CD4-positive, alpha-beta T cell (primary cell): ENCODE measurements at regions of chr2 and their contacts with region 1.

Region 1: DNA sequence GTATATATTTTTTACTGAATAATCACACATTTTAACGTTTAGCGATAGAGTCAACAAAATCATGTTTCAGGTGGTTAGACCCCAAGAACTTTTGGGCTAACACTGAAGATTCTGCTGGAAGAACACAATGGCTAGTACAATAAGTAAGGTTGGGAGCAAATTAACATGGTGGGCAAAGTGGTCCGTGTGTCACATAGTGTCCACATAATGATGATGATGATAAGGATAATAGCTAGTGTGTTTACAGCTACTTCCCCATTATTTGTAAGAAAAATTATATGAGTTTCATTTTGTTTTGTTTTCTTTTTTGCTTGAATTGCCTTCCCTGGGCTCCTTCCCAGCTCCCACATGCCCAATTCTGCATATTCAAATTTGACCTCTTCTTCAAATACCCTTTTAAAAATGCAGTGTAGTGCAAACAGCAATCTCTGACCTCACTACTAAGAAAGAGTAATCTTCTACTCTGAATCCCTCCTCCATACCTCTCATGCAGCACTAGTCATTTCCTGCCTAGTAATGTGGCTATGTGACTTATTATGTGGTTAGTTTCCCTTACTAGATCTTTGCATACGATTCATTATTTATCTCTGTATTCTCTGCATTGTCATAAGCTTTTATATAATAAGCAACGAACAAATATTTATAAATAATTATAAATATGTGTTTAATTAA is 16.9 kb upstream of the VPS54 start:
- DNase-seq: peak in 5 of 14 experiments; percentile 10 to 82 (median 74)
- ATAC-seq: peak; percentile 96
- H3K4me3 ChIP-seq: no peak overlapping the region
- H3K4me3 Mint-ChIP-seq: peak overlapping the region; percentile 70
- H3K27ac ChIP-seq: no peak overlapping the region
- H3K27ac Mint-ChIP-seq: peak overlapping the region; percentile 63
- H3K4me1 ChIP-seq: peaks cover 17% of the 10 kb centered on the region
- H3K4me1 Mint-ChIP-seq: peaks cover 51% of the 10 kb centered on the region
- H3K27me3 ChIP-seq: no peaks in the 10 kb centered on the region
- H3K27me3 Mint-ChIP-seq: no peaks in the 10 kb centered on the region
- CTCF ChIP-seq: no peak

Region 2: DNA sequence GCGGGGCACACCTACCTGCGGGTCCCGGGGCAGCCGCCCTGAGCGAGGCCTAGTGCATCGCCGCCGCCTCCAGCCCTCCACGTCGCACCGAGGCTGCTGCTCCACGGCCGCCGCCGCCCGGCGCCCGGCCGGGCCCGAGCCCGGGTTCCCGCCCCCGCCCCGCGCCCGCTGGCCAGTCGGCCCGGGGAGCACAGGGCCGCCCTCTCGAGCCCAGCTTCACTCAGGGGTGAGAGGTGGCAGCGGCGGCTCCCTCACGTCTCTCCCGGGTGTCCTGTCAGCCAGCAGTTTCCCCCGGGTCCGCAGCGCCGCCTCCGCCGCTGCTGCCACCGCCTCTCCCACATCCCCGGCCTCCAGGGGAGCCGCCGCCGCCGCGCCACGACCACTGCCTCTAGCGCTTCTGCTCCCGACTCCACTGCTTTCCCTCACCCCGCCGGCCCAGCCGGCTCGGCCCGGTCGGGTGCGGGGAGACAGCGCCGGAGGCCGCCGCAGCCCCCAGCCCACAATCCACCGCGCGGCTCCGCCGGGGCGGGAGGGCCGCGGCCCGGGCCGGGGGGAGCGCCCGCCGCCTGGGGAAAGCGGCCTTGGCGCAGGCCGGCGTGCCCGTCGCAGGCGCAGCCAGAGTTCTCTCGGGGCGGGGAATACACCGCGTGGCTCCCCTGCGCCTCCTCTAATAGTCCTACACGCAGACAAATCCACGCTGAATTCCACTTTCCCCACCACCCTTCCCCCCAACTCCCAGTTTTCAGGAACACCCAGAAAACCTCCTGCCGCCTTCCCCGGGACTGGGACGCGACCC is 17.0 kb before region 1 on chr2 and contains the start of gene VPS54:
- CTCF ChIA-PET with region 1: interaction called, 7 read pairs
- POLR2A ChIA-PET with region 1: interaction called, 11 read pairs
- intact Hi-C with region 1: loop called in 1 of 2 experiments (anchors 1 kb)
- DNase-seq: peak; percentile 40 to 80 (median 48)
- ATAC-seq: peak; percentile 74
- H3K4me3 ChIP-seq: peak within 1 kb of the TSS; percentile 71
- H3K4me3 Mint-ChIP-seq: peak within 1 kb of the TSS; percentile 100
- H3K27ac ChIP-seq: peak within 1 kb of the TSS; percentile 35 to 54
- H3K27ac Mint-ChIP-seq: peak within 1 kb of the TSS; percentile 95
- H3K4me1 ChIP-seq: peaks cover 12% of the 10 kb centered on the region
- H3K4me1 Mint-ChIP-seq: peaks cover 46% of the 10 kb centered on the region
- H3K27me3 ChIP-seq: no peaks in the 10 kb centered on the region
- H3K27me3 Mint-ChIP-seq: no peaks in the 10 kb centered on the region
- CTCF ChIP-seq: no peak
- total RNA-seq, gene VPS54: 9.5 to 10.8 TPM

Region 3: GRCh38 chr2:64101141-64101591 is 65.0 kb after region 1 on chr2:
- CTCF ChIA-PET with region 1: no interaction called
- POLR2A ChIA-PET with region 1: no interaction called
- intact Hi-C with region 1: no loop called
- DNase-seq: peak in 3 of 14 experiments; percentile 21 to 63 (median 30)
- ATAC-seq: peak; percentile 49
- H3K4me3 ChIP-seq: no peak overlapping the region
- H3K4me3 Mint-ChIP-seq: peak overlapping the region; percentile 35
- H3K27ac ChIP-seq: peak overlapping the region in 1 of 2 donors; percentile 56
- H3K27ac Mint-ChIP-seq: peak overlapping the region; percentile 69
- H3K4me1 ChIP-seq: peaks cover 9% of the 10 kb centered on the region
- H3K4me1 Mint-ChIP-seq: peaks cover 51% of the 10 kb centered on the region
- H3K27me3 ChIP-seq: no peaks in the 10 kb centered on the region
- H3K27me3 Mint-ChIP-seq: no peaks in the 10 kb centered on the region
- CTCF ChIP-seq: no peak

Region 4: GRCh38 chr2:64203858-64204632 is 167.9 kb after region 1 on chr2:
- CTCF ChIA-PET with region 1: no interaction called
- POLR2A ChIA-PET with region 1: interaction called, 3 read pairs
- intact Hi-C with region 1: loop called in 1 of 2 experiments (anchors 10 kb)
- DNase-seq: peak in 9 of 14 experiments; percentile 10 to 94 (median 18)
- ATAC-seq: peak; percentile 30
- H3K4me3 ChIP-seq: peak overlapping the region; percentile 42
- H3K4me3 Mint-ChIP-seq: peak overlapping the region; percentile 80
- H3K27ac ChIP-seq: peak overlapping the region; percentile 72 to 88
- H3K27ac Mint-ChIP-seq: peak overlapping the region; percentile 92
- H3K4me1 ChIP-seq: peaks cover 48% of the 10 kb centered on the region
- H3K4me1 Mint-ChIP-seq: peaks cover 90% of the 10 kb centered on the region
- H3K27me3 ChIP-seq: no peaks in the 10 kb centered on the region
- H3K27me3 Mint-ChIP-seq: no peaks in the 10 kb centered on the region
- CTCF ChIP-seq: no peak